Prostate gland (tissue), 2 donors: ENCODE measurements at regions of chr6 and their contacts with region 1.

Region 1: GRCh38 chr6:7238900-7239589 is 74.0 kb downstream of the SSR1 start:
- DNase-seq: peak; percentile 90
- H3K4me3 ChIP-seq: no peak overlapping the region
- H3K27ac ChIP-seq: peak overlapping the region; percentile 34 to 55
- H3K4me1 ChIP-seq: peaks cover 19% of the 10 kb centered on the region
- H3K27me3 ChIP-seq: no peaks in the 10 kb centered on the region
- CTCF ChIP-seq: peak; percentile 18 to 86 (median 75)
- POLR2A ChIP-seq: no peak

Region 2: GRCh38 chr6:6676910-6677441 is 562.1 kb before region 1 on chr6:
- intact Hi-C with region 1: loop called (anchors 2 kb)
- DNase-seq: peak; percentile 73
- H3K4me3 ChIP-seq: no peak overlapping the region
- H3K27ac ChIP-seq: no peak overlapping the region
- H3K4me1 ChIP-seq: no peaks in the 10 kb centered on the region
- H3K27me3 ChIP-seq: no peaks in the 10 kb centered on the region
- CTCF ChIP-seq: peak; percentile 91 to 96 (median 93)
- POLR2A ChIP-seq: no peak

Region 3: GRCh38 chr6:6724539-6725467 is 514.2 kb before region 1 on chr6:
- intact Hi-C with region 1: loop called (anchors 2 kb)
- DNase-seq: peak; percentile 63
- H3K4me3 ChIP-seq: peak overlapping the region; percentile 18 to 24
- H3K27ac ChIP-seq: peak overlapping the region; percentile 72 to 74
- H3K4me1 ChIP-seq: peaks cover 8% of the 10 kb centered on the region
- H3K27me3 ChIP-seq: no peaks in the 10 kb centered on the region
- CTCF ChIP-seq: peak; percentile 56 to 72 (median 64)
- POLR2A ChIP-seq: no peak

Region 4: DNA sequence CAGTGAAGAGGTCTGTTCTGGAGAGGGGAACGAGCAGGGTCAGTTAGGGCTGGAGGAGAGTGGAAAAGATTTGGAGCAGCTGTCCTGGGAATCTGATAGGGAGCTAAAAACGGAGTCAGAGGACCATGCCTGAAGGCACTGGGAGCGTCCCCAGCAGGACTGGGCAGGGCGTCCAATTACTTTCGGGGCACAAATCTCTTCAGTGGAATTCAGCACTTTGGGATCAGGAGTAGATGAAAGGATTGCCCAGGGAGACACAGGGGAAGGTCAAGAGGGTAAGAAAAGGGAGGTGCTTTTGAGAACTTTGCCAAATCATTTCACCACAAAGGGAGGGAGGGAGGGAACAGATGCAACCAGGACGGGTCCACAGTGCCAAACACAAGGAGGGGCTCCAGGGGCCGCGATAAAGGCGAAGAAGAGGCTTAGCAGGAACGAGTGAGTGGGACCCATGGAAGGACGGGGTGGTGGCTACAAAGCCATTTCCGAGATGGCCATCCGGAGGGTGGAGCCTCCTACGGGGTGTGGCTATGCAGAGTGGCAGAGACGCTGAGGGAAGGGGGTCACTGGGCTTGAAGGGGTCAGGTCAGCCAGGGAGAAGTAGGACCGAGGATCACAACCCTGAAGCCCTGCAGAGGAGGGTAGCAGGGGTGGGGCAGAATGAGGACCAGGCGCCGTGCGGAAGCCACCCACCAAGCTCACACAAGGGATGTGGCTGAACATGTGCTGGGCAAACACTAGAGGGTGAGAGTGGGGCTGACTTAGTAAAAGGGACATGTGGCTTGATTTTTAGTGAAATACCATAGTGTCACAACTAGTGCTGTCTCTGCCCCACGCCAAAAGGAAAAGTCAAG is 311.3 kb before region 1 on chr6:
- intact Hi-C with region 1: loop called (anchors 10 kb)
- DNase-seq: no peak
- H3K4me3 ChIP-seq: no peak overlapping the region
- H3K27ac ChIP-seq: no peak overlapping the region
- H3K4me1 ChIP-seq: no peaks in the 10 kb centered on the region
- H3K27me3 ChIP-seq: no peaks in the 10 kb centered on the region
- CTCF ChIP-seq: no peak
- POLR2A ChIP-seq: no peak

Region 5: DNA sequence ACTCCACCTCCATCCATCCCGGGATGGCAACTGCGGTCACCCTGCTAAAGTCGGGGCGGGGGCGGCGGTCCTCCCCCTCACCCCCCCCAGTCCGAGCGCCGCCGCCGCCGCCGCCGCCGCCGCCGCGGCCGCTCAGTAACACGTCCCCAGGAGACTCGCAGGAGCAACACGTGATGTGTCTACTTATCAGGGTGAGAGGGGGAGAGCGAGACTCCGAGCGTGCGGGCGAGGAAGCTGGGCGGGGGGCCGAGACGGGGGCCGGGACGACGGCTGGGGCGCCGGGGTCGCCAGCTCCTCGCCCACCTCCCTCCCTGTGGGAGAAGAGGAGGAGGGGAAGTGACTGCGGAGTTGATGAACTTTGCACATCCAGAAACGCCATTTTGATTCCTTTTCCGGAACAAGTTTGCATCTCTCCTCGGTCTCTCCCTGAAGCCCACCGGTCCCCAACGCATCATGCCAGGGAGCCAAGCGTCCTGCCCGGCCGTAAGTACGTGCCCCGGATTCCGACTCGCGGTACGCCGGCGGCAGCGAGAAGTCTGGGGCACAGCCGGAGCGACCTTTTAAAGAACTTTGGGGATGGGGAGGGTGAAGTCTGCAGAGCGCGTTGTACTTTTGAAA is 131.4 kb before region 1 on chr6 and contains the start of gene RREB1:
- intact Hi-C with region 1: loop called (anchors 5 kb)
- DNase-seq: peak; percentile 76
- H3K4me3 ChIP-seq: peak within 1 kb of the TSS; percentile 79 to 88
- H3K27ac ChIP-seq: peak within 1 kb of the TSS; percentile 88 to 97
- H3K4me1 ChIP-seq: no peaks in the 10 kb centered on the region
- H3K27me3 ChIP-seq: no peaks in the 10 kb centered on the region
- CTCF ChIP-seq: no peak
- POLR2A ChIP-seq: peak; percentile 56
- total RNA-seq, gene RREB1: 58.4 to 71.0 TPM